ENCODE measurements at regions of chr3 and their contacts with region 1.

Region 1: DNA sequence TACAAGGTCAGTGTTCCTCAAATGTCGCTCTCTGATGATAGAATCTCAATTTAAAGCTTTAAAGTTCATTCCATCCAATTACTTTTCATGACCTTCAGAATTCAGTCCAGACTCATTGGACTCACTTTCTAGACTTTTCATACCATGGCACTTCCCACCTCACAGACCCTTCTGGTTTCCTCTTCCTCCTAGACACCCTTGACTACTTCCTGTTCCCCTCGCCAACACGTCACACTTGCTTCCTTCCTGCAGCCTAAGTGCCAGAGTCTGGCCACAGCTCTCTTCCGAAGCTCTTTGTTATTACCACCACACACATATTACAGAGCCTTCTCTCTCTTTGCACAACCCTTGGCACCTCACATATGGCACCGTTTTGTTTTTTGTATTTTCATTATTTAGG is 59.1 kb upstream of the UMPS start:
- DNase-seq: no peak
- ATAC-seq: peak; percentile 84
- H3K4me3 Mint-ChIP-seq: peak overlapping the region; percentile 54
- H3K27ac Mint-ChIP-seq: peak overlapping the region; percentile 86
- H3K4me1 Mint-ChIP-seq: peaks cover 39% of the 10 kb centered on the region
- H3K27me3 Mint-ChIP-seq: no peaks in the 10 kb centered on the region

Region 2: DNA sequence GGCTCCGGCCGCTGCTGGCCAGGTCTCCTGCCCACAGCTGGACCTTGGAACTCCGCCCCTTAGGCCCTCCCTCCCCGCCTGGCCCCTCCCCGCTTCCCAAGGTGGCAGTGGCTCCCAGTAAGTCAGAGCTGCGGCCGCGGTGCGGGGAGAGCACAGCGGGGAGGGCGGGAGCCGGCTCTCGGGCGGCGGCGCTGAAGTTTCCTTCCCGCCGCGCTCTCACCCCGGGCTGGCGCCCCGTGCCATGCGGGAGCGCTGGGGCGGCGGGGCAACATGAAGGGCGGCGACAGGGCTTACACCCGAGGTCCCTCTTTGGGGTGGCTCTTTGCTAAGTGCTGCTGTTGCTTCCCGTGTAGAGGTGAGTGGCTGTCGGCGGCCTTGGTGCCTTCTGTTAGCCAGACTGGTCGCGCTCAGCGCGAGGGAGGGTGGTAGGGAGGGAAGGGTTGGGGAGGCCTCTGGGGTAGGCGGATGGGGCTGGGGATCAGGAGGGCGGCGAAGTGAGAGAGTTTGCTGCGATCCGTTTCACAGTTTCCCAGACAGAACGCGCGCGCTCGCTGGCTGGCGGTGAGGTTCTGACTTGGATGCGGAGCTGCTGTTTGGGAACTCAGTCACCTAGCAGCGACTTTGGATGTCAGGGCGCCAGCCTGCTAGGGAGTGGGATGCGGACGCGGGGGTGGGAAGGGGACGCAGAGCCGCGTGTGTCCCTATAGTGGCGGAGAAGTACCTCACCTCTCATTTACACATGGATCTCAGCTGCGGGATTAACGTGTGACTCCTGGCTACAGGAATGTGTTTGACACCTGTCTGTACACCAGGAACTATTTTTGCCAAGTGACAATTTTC is 86.3 kb before region 1 on chr3:
- POLR2A ChIA-PET with region 1: no interaction called
- DNase-seq: peak; percentile 59
- ATAC-seq: peak; percentile 79
- H3K4me3 Mint-ChIP-seq: peak overlapping the region; percentile 89
- H3K27ac Mint-ChIP-seq: peak overlapping the region; percentile 45
- H3K4me1 Mint-ChIP-seq: peaks cover 19% of the 10 kb centered on the region
- H3K27me3 Mint-ChIP-seq: peaks cover 56% of the 10 kb centered on the region

Region 3: DNA sequence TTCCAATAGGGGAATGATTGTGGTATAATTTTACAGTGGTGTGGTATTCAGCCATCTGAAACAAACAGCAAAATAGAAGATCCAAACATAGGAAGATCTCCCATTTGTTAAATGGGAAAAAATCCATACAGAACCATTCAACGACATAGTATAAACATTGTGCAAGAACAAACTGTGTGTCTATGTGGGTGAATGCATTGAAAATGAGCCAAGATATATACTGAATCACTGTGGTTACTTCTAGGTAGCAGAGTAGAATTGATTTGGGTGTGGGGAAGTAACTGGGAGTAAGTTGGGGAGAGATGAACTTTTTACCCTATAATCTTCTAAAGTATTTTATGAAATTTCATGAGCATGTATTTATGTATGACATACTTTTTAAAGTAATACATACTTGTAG is 63.9 kb before region 1 on chr3:
- POLR2A ChIA-PET with region 1: no interaction called
- DNase-seq: no peak
- ATAC-seq: no peak
- H3K4me3 Mint-ChIP-seq: no peak overlapping the region
- H3K27ac Mint-ChIP-seq: no peak overlapping the region
- H3K4me1 Mint-ChIP-seq: peaks cover 2% of the 10 kb centered on the region
- H3K27me3 Mint-ChIP-seq: peaks cover 25% of the 10 kb centered on the region

Region 4: GRCh38 chr3:124639406-124640237 is 31.5 kb before region 1 on chr3:
- POLR2A ChIA-PET with region 1: interaction called, 17 read pairs
- DNase-seq: no peak
- ATAC-seq: peak; percentile 79
- H3K4me3 Mint-ChIP-seq: peak overlapping the region; percentile 75
- H3K27ac Mint-ChIP-seq: peak overlapping the region; percentile 76
- H3K4me1 Mint-ChIP-seq: peaks cover 59% of the 10 kb centered on the region
- H3K27me3 Mint-ChIP-seq: no peaks in the 10 kb centered on the region

Measured in activated naive CD8-positive, alpha-beta T cell treated with anti-CD3 and anti-CD28 coated beads, Interleukin-2, amount 10 ng/mL, durations not matched to agents 7 days and 5 days (primary cell).